Gastrocnemius medialis (tissue), 4 donors: ENCODE measurements at regions of chr1 and their contacts with region 1.

Region 1: DNA sequence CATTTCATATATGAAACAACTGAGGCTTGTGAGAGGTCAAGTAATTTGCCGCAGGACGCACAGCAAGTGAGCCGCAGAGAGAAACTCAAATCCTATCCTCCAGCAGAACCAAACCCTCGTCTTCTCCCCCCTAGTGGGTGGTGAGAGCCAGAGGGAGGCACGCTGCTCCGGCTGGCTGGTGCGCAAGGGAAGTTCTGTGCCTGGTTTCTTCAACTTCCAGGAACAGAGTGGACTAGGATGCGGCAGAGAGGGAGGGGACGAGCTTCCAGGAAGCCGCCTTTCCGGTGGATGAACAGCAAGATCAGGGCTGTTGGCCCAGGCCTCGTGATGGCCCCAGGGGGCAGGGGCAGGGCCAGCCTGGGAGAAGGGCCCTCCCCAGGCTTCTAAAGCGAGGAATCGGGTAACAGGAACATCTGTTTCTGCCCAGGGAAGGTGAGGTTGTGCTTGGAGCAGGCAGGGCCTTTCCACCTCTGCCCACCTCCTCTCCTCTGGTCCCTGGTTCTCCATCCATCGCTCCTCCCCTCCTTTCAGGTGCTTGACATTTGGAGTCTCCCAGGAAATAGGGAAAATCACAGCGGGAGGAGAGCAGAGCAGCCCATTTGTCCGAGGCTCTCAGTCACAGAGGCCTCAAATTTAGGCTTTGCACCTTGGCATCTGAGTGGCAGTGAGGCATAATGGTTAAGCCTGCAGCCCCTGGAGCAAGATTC is 16.8 kb upstream of the PDIK1L start:
- DNase-seq: peak; percentile 77 to 84
- ATAC-seq: peak; percentile 82 to 86
- H3K4me3 ChIP-seq: peak overlapping the region; percentile 23 to 43 (median 31)
- H3K27ac ChIP-seq: peak overlapping the region; percentile 84 to 88 (median 84)
- H3K4me1 ChIP-seq: peaks cover 15 to 17% of the 10 kb centered on the region in 2 donors
- H3K27me3 ChIP-seq: no peaks in the 10 kb centered on the region
- CTCF ChIP-seq: peak in 3 of 5 experiments; percentile 32 to 48 (median 40)
- POLR2A ChIP-seq: peak; percentile 41 to 63

Region 2: GRCh38 chr1:26072305-26072704 is 22.5 kb before region 1 on chr1:
- in situ Hi-C with region 1: no loop called
- intact Hi-C with region 1: loop called (anchors 2 kb)
- DNase-seq: peak; percentile 95 to 97
- ATAC-seq: peak; percentile 51 to 56
- H3K4me3 ChIP-seq: peak overlapping the region in 2 of 4 donors; percentile 29 to 30
- H3K27ac ChIP-seq: peak overlapping the region; percentile 88 to 96 (median 93)
- H3K4me1 ChIP-seq: peaks cover 48 to 72% of the 10 kb centered on the region in 2 donors
- H3K27me3 ChIP-seq: no peaks in the 10 kb centered on the region
- CTCF ChIP-seq: no peak
- POLR2A ChIP-seq: peak in 1 of 2 donors; percentile 59

Region 3: DNA sequence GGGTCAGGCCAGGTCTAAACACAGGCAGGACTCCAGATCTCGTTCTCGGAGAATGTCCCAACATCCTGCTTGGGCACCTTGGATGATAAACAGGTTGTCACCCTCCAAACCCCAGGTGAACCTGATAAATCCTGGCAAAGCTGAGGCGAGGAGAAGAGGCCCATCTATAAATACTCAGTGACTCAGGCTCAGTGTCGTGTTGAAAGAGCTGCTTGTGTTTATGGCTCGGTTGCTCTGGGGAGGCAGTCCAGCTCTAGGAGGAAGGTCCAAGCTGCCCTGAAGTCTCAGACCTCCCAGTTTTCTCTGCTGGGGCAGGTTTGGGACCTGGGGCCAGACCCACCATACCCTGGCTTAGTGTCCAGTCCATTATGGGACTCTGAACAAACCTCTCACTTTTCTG is 11.6 kb before region 1 on chr1:
- in situ Hi-C with region 1: no loop called
- intact Hi-C with region 1: loop called (anchors 1 kb)
- DNase-seq: peak; percentile 93 to 96
- ATAC-seq: peak; percentile 76 to 78
- H3K4me3 ChIP-seq: peak overlapping the region in 3 of 4 donors; percentile 14 to 40 (median 39)
- H3K27ac ChIP-seq: peak overlapping the region; percentile 88 to 96 (median 90)
- H3K4me1 ChIP-seq: peaks cover 55 to 60% of the 10 kb centered on the region in 2 donors
- H3K27me3 ChIP-seq: no peaks in the 10 kb centered on the region
- CTCF ChIP-seq: no peak
- POLR2A ChIP-seq: peak; percentile 68 to 81